Activated CD8-positive, alpha-beta memory T cell treated with anti-CD3 and anti-CD28 coated beads, Interleukin-2, amount 10 ng/mL, durations not matched to agents 7 days and 5 days (primary cell): ENCODE measurements at regions of chr7 and their contacts with region 1.

Region 1: DNA sequence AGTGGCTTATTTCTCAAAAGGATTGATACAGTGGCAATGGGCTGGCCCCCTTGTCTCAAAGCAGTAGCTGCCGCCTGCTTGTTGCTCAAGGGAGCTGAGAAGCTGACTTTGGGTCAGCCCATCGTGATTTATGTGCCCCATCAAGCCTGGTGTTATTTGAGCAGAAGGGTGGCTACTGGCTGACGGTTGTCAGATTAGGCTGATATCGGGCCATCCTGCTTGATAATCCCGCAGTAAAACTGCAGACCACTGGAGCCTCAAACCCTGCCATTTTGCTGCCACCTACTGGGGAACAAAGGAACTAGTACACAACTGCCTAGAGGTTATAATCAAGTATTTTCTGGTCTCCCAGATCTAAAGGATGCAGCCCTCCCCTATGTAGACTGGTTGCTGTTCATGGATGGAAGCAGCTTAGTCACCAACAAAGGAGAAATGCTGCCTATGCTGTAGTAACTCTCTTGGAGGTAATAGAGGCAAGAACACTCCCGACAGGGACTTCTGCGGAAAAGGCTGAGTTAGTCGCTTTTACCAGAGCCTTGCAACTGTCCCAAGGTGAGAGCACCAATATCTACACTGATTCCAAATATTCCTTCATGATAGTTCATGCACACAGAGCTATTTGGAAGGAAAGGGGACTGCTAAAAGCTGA is 65.9 kb upstream of the ZNF92 start:
- DNase-seq: peak; percentile 60
- ATAC-seq: peak; percentile 67
- H3K4me3 Mint-ChIP-seq: no peak overlapping the region
- H3K27ac Mint-ChIP-seq: no peak overlapping the region
- H3K4me1 Mint-ChIP-seq: no peaks in the 10 kb centered on the region
- H3K27me3 Mint-ChIP-seq: no peaks in the 10 kb centered on the region

Region 2: GRCh38 chr7:64951250-64951848 is 356.4 kb before region 1 on chr7:
- CTCF ChIA-PET with region 1: interaction called, 15 read pairs
- DNase-seq: no peak
- ATAC-seq: no peak
- H3K4me3 Mint-ChIP-seq: no peak overlapping the region
- H3K27ac Mint-ChIP-seq: no peak overlapping the region
- H3K4me1 Mint-ChIP-seq: no peaks in the 10 kb centered on the region
- H3K27me3 Mint-ChIP-seq: peaks cover 27% of the 10 kb centered on the region

Region 3: GRCh38 chr7:65216459-65216858 is 91.3 kb before region 1 on chr7:
- CTCF ChIA-PET with region 1: interaction called, 12 read pairs
- DNase-seq: peak; percentile 69
- ATAC-seq: peak; percentile 60
- H3K4me3 Mint-ChIP-seq: no peak overlapping the region
- H3K27ac Mint-ChIP-seq: no peak overlapping the region
- H3K4me1 Mint-ChIP-seq: peaks cover 3% of the 10 kb centered on the region
- H3K27me3 Mint-ChIP-seq: no peaks in the 10 kb centered on the region

Region 4: DNA sequence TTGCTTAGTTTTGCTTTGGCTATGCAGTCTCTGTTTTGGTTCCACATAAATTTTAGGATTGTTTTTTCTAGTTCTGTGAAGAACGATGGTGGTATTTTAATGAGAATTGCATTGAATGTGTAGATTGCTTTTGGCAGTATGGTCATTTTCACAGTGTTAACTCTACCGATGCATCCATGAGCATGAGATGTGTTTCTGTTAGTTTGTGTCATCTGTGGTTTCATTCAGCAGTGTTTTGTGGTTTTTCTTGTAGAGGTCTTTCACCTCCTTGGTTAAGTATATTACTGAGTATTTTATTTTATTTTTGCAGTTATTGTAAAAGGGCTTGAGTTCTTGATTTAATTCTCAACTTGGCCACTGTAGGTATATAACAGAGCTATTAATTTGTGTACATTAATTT is 12.4 kb before region 1 on chr7:
- CTCF ChIA-PET with region 1: no interaction called
- DNase-seq: no peak
- ATAC-seq: no peak
- H3K4me3 Mint-ChIP-seq: no peak overlapping the region
- H3K27ac Mint-ChIP-seq: peak overlapping the region; percentile 42
- H3K4me1 Mint-ChIP-seq: peaks cover 16% of the 10 kb centered on the region
- H3K27me3 Mint-ChIP-seq: peaks cover 6% of the 10 kb centered on the region